Heart left ventricle (tissue), 16 donors: ENCODE measurements at regions of chr10 and their contacts with region 1.

Region 1: GRCh38 chr10:104406715-104407650 is 53.4 kb downstream of the CFAP58 start:
- DNase-seq: no peak
- ATAC-seq: peak in 1 of 4 donors; percentile 57
- H3K4me3 ChIP-seq: no peak overlapping the region
- H3K27ac ChIP-seq: no peak overlapping the region
- H3K4me1 ChIP-seq: no peaks in the 10 kb centered on the region
- H3K27me3 ChIP-seq: no peaks in the 10 kb centered on the region
- CTCF ChIP-seq: peak; percentile 17 to 52 (median 37)
- POLR2A ChIP-seq: no peak

Region 2: GRCh38 chr10:104456802-104457542 is 50.0 kb after region 1 on chr10:
- intact Hi-C with region 1: no loop called
- DNase-seq: no peak
- ATAC-seq: no peak
- H3K4me3 ChIP-seq: no peak overlapping the region
- H3K27ac ChIP-seq: no peak overlapping the region
- H3K4me1 ChIP-seq: no peaks in the 10 kb centered on the region
- H3K27me3 ChIP-seq: no peaks in the 10 kb centered on the region
- CTCF ChIP-seq: no peak
- POLR2A ChIP-seq: no peak

Region 3: GRCh38 chr10:104622598-104623209 is 215.7 kb after region 1 on chr10:
- intact Hi-C with region 1: loop called in 6 of 10 experiments (anchors 2 to 10 kb)
- DNase-seq: no peak
- ATAC-seq: no peak
- H3K4me3 ChIP-seq: no peak overlapping the region
- H3K27ac ChIP-seq: no peak overlapping the region
- H3K4me1 ChIP-seq: no peaks in the 10 kb centered on the region
- H3K27me3 ChIP-seq: peaks cover 0 to 38% (median 5%) of the 10 kb centered on the region in 9 donors
- CTCF ChIP-seq: peak in 9 of 12 donors; percentile 7 to 41 (median 27)
- POLR2A ChIP-seq: no peak